ENCODE measurements at regions of chr13 and their contacts with region 1.

Region 1: GRCh38 chr13:48769107-48769704 is 115.5 kb downstream of the CYSLTR2 start:
- ATAC-seq: peak; percentile 64 to 95 (median 84)
- H3K4me3 ChIP-seq: no peak overlapping the region
- H3K27ac ChIP-seq: no peak overlapping the region
- H3K4me1 ChIP-seq: no peaks in the 10 kb centered on the region

Region 2: DNA sequence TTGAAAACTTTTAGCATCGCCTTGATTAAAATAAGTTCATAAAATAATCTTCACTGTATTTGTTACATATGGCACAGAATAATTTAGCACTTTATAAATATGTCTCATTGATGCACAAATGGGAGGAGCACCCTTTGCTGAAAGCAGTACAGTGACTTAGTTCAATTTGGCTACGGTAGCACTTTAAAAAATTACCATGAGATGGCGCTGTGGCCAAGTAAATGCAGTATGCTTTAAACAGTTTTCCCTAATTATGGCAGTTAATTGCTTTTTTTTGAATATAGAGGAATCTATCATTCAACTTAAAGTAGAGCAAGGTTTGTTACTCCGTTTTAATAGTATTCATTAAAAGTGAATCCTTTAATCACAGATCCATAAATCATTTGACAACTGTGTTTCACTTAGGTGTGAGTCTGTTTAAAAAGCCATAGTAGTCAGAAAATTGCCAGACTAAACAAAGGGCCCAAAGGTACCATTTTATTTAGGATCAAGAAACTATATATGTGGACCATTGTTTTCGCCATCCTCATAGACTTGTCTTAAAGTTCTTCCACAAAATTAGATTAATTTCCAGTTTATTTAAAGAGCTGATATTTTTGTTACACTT is 1937.5 kb before region 1 on chr13:
- in situ Hi-C with region 1: loop called in 1 of 9 experiments (anchors 25 kb)
- ATAC-seq: peak in 3 of 8 experiments; percentile 51 to 75 (median 57)
- H3K4me3 ChIP-seq: no peak overlapping the region
- H3K27ac ChIP-seq: no peak overlapping the region
- H3K4me1 ChIP-seq: no peaks in the 10 kb centered on the region

Region 3: DNA sequence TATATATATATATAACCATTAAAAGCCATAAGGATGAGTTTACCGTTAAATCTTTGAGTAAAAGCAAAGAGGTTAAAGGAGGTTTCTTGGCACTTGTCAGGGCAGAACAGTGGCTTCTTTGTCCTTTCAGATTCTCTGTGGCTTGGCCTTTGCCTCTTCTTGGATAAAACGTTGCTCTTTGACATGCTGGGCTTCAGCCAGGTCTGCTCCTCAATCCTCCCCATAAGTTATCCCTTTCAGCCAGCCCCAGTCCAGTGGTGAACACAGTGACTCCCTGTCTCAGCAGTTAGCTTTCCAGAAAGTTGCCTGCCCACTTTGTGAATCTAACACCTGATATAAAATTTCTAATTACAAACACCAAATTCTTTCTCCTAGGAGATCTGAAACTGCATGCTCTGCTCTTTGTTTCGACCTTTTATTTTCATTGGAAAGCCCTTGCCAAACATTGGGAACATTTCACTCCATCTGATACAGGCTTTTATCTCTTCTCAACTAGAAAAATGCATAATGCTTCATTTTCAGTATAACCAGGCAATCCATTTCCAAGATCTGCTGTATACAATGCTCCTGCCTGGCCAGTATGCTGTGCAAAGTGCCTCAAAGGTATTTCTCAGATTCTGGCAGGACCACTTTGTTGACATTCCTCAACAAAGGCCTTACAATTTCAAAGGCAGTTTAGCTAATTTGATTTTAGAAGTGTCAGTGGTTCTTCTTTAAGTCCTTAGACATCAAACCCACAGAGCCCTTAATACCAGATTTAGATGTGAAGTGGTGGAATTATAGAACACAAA is 658.1 kb before region 1 on chr13:
- in situ Hi-C with region 1: loop called in 2 of 9 experiments (anchors 25 kb)
- ATAC-seq: peak in 2 of 8 experiments; percentile 20 to 81
- H3K4me3 ChIP-seq: no peak overlapping the region
- H3K27ac ChIP-seq: no peak overlapping the region
- H3K4me1 ChIP-seq: no peaks in the 10 kb centered on the region

Region 4: DNA sequence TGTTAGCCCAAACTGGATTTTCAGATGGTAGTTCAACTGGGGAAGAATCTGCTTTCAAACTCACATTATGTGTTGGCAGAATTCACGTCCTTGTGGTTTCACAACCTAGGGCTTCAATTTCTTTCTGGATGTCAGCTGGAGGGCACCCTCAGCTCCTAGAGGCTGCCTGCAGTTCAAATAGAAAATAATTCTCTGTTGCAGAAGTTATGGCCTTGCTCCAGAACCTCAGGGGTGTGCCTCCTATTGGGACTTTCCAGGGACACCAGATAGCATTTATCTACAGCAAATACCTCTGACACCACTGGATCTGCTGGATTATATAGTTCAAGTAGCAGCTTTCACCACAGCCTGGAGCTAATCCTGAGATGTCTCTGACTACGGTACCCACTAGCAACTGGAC is 477.5 kb before region 1 on chr13:
- in situ Hi-C with region 1: loop called in 1 of 9 experiments (anchors 25 kb)
- ATAC-seq: peak in 2 of 8 experiments; percentile 58 to 71
- H3K4me3 ChIP-seq: no peak overlapping the region
- H3K27ac ChIP-seq: no peak overlapping the region
- H3K4me1 ChIP-seq: no peaks in the 10 kb centered on the region

Region 5: GRCh38 chr13:48595431-48596429 is 173.5 kb before region 1 on chr13:
- in situ Hi-C with region 1: loop called in 3 of 9 experiments (anchors 10 to 25 kb)
- ATAC-seq: peak in 7 of 8 experiments; percentile 6 to 77 (median 37)
- H3K4me3 ChIP-seq: no peak overlapping the region
- H3K27ac ChIP-seq: peak overlapping the region in 1 of 2 donors; percentile 69
- H3K4me1 ChIP-seq: peaks cover 25 to 40% of the 10 kb centered on the region in 2 donors

Measured in motor neuron (in vitro differentiated cells).